ENCODE measurements at regions of chr15 and their contacts with region 1.

Region 1: GRCh38 chr15:68126396-68126795 is 72.3 kb downstream of the PIAS1 start:
- DNase-seq: peak; percentile 79
- H3K4me3 Mint-ChIP-seq: no peak overlapping the region
- H3K27ac Mint-ChIP-seq: no peak overlapping the region
- H3K4me1 Mint-ChIP-seq: peaks cover 26% of the 10 kb centered on the region
- H3K27me3 Mint-ChIP-seq: no peaks in the 10 kb centered on the region
- CTCF ChIP-seq: no peak

Region 2: GRCh38 chr15:68047826-68048225 is 78.6 kb before region 1 on chr15:
- CTCF ChIA-PET with region 1: no interaction called
- POLR2A ChIA-PET with region 1: no interaction called
- intact Hi-C with region 1: no loop called
- DNase-seq: no peak
- H3K4me3 Mint-ChIP-seq: no peak overlapping the region
- H3K27ac Mint-ChIP-seq: no peak overlapping the region
- H3K4me1 Mint-ChIP-seq: peaks cover 7% of the 10 kb centered on the region
- H3K27me3 Mint-ChIP-seq: no peaks in the 10 kb centered on the region
- CTCF ChIP-seq: no peak

Region 3: GRCh38 chr15:68114356-68114755 is 12.0 kb before region 1 on chr15:
- CTCF ChIA-PET with region 1: no interaction called
- POLR2A ChIA-PET with region 1: interaction called, 24 read pairs
- intact Hi-C with region 1: no loop called
- DNase-seq: no peak
- H3K4me3 Mint-ChIP-seq: peak overlapping the region; percentile 67
- H3K27ac Mint-ChIP-seq: peak overlapping the region; percentile 43
- H3K4me1 Mint-ChIP-seq: peaks cover 20% of the 10 kb centered on the region
- H3K27me3 Mint-ChIP-seq: no peaks in the 10 kb centered on the region
- CTCF ChIP-seq: no peak

Region 4: GRCh38 chr15:68352401-68353062 is 226.1 kb after region 1 on chr15:
- CTCF ChIA-PET with region 1: no interaction called
- POLR2A ChIA-PET with region 1: no interaction called
- intact Hi-C with region 1: no loop called
- DNase-seq: peak; percentile 94
- H3K4me3 Mint-ChIP-seq: no peak overlapping the region
- H3K27ac Mint-ChIP-seq: peak overlapping the region; percentile 80
- H3K4me1 Mint-ChIP-seq: peaks cover 28% of the 10 kb centered on the region
- H3K27me3 Mint-ChIP-seq: no peaks in the 10 kb centered on the region
- CTCF ChIP-seq: no peak

Measured in MCF 10A (cell line).